ENCODE measurements at regions of chr3 and their contacts with region 1.

Region 1: DNA sequence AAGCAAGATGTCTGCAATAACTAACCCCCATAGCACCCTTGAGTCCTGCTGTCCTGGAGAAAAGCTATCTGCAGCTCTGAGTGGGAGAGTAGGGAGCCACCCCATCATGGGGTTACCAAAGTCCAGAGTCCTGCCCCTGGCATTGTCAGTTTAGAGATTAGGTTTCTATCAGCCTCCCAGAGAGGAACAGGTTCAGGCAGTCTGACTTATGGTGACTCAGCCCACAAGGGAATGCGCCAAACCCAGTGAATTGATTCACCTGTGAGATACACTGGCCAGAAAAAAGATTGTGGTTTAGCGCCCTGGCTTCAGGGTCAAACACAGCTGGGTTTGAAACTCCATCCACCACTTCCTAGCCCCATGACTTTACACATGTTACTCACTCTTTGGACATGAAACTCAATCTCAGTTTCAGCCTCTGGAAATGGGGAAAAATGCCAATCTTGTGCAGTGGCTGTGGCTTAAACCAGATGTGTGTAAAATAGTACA is 263.6 kb upstream of the HES1 start:
- DNase-seq: peak; percentile 94
- ATAC-seq: peak; percentile 85
- H3K4me3 ChIP-seq: no peak overlapping the region
- H3K27ac ChIP-seq: peak overlapping the region; percentile 76
- H3K4me1 ChIP-seq: peaks cover 37% of the 10 kb centered on the region
- H3K27me3 ChIP-seq: no peaks in the 10 kb centered on the region
- CTCF ChIP-seq: no peak

Region 2: DNA sequence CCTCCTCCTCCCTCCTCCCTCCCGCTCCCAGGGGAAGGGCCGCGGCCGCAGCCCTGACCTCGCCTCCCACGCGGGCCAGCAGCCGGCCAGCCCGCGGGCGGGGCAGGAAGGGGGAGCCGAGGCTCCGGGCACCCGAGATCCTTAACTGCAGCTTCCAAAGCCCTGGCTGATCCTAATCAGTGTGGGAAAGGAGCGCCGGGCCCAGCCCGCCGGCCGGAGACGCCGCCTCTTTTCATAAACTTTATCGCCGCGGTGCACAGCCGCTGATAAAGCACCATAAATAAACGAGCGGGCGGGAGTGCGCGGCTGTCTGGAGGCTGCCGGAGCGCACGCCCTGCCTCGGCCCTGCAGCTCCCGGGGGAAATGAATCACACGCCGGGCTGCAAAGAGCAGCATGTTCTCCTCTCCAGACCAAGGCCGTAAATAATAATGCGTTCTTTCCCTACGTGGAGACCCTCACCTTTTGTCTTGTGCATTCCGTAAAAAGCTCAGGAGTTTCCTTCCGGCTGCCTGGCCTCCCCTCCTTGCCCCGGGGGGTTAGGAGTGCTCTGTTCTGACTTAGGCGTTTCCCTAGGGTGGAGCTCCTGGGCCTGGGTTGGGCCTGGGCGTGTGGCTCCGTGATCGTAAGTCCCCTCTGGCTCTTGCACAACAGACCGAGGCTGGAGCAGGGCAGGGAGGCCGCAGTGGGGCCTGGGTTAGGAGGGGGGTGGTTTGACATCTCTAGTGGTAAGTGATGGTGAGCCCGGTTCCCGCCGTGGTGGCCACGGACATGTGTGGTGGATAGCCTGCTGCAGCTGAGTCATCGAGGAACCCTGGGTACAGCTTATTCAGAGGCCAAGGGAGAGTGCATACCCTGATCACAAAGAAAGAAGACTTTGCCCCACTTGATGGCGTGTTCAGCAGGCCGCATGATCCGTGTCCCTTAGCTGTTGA is 131.1 kb after region 1 on chr3:
- CTCF ChIA-PET with region 1: no interaction called
- POLR2A ChIA-PET with region 1: no interaction called
- in situ Hi-C with region 1: no loop called
- intact Hi-C with region 1: loop called (anchors 2 kb)
- DNase-seq: peak; percentile 71
- ATAC-seq: peak; percentile 92
- H3K4me3 ChIP-seq: peak overlapping the region; percentile 47 to 62
- H3K27ac ChIP-seq: peak overlapping the region; percentile 72
- H3K4me1 ChIP-seq: peaks cover 34% of the 10 kb centered on the region
- H3K27me3 ChIP-seq: no peaks in the 10 kb centered on the region
- CTCF ChIP-seq: no peak

Region 3: GRCh38 chr3:194328053-194328657 is 455.8 kb after region 1 on chr3:
- CTCF ChIA-PET with region 1: interaction called, 16 read pairs
- POLR2A ChIA-PET with region 1: no interaction called
- in situ Hi-C with region 1: no loop called
- intact Hi-C with region 1: no loop called
- DNase-seq: no peak
- ATAC-seq: peak; percentile 40
- H3K4me3 ChIP-seq: no peak overlapping the region
- H3K27ac ChIP-seq: peak overlapping the region; percentile 3; the same call in 1 of the 2 replicates
- H3K4me1 ChIP-seq: peaks cover 5% of the 10 kb centered on the region; the same call in 1 of the 2 replicates
- H3K27me3 ChIP-seq: no peaks in the 10 kb centered on the region
- CTCF ChIP-seq: no peak

Measured in Panc1 (cell line).